ENCODE measurements at regions of chr12 and their contacts with region 1.

Region 1: DNA sequence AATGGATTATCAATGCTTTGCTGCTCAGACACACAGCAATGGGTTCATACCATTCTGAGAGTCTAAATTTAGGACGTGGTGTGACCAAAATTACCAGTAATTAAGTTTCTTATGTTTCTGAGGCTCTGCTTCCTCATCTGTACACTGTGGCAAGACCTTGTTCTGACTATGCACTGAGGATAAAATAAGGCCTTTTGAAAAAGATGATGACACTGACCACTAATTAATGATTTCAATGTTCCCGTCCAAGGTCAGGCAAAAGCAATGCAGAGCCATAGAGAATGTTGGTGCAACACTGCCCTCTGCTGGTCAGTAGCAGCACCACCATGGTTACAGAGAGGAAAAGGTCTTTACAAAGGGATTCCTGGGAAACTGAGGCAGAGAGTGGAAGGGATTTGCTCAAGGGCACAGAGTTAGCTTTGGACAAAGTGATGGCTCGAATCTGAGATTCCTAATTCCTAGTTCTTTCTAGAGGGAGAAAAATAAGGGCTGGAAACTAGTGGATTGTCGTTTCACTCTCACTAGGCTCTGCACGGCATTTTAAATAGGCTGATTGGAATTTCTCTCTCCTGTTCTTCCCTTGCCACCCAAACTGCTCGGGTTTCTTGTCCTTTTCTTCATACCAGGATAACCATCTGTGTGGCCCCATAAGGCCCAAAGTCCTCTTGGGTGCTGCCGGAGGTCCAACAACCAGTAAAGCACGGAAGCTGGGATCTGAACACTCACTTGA is 22.3 kb upstream of the P2RX7 start:
- DNase-seq: peak; percentile 80 to 85 (median 85)
- H3K4me3 ChIP-seq: no peak overlapping the region
- H3K4me3 Mint-ChIP-seq: no peak overlapping the region
- H3K27ac ChIP-seq: no peak overlapping the region
- H3K27ac Mint-ChIP-seq: peak overlapping the region in 5 of 7 donors; percentile 37 to 71 (median 58)
- H3K4me1 ChIP-seq: peaks cover 10 to 17% of the 10 kb centered on the region in 2 donors
- H3K4me1 Mint-ChIP-seq: peaks cover 16% of the 10 kb centered on the region
- H3K27me3 ChIP-seq: no peaks in the 10 kb centered on the region
- H3K27me3 Mint-ChIP-seq: peaks cover 0 to 1% (median 1%) of the 10 kb centered on the region in 3 donors
- CTCF ChIP-seq: peak; percentile 97

Region 2: DNA sequence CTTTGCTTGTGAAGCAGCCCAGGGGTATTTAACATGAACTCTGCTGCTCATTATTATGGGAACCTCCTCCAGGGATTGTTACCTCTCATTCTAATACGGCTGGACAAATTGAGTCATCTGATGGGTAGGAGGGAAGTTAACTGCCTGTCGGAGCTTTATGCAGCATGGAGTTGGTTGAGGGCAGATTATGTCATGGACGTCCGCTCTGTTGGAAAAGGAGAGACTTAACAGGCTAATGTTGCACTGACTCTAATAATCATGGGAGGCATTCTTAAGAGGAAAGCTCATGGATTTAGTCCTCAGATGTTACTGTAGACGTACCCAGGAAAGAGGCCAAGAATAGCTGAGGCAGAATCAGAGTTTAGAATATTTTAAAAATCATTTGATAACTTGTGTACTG is 539.1 kb before region 1 on chr12:
- intact Hi-C with region 1: loop called in 1 of 2 experiments (anchors 10 kb)
- DNase-seq: no peak
- H3K4me3 ChIP-seq: no peak overlapping the region
- H3K4me3 Mint-ChIP-seq: no peak overlapping the region
- H3K27ac ChIP-seq: no peak overlapping the region
- H3K27ac Mint-ChIP-seq: peak overlapping the region in 1 of 7 donors; percentile 4
- H3K4me1 ChIP-seq: no peaks in the 10 kb centered on the region
- H3K4me1 Mint-ChIP-seq: peaks cover 4% of the 10 kb centered on the region
- H3K27me3 ChIP-seq: no peaks in the 10 kb centered on the region
- H3K27me3 Mint-ChIP-seq: no peaks in the 10 kb centered on the region
- CTCF ChIP-seq: no peak

Region 3: GRCh38 chr12:121005346-121005815 is 105.0 kb before region 1 on chr12:
- intact Hi-C with region 1: loop called (anchors 5 kb)
- DNase-seq: peak; percentile 25 to 56 (median 40)
- H3K4me3 ChIP-seq: no peak overlapping the region
- H3K4me3 Mint-ChIP-seq: no peak overlapping the region
- H3K27ac ChIP-seq: no peak overlapping the region
- H3K27ac Mint-ChIP-seq: peak overlapping the region in 5 of 7 donors; percentile 26 to 71 (median 43)
- H3K4me1 ChIP-seq: no peaks in the 10 kb centered on the region
- H3K4me1 Mint-ChIP-seq: no peaks in the 10 kb centered on the region
- H3K27me3 ChIP-seq: no peaks in the 10 kb centered on the region
- H3K27me3 Mint-ChIP-seq: peaks cover 0 to 4% (median 2%) of the 10 kb centered on the region in 3 donors
- CTCF ChIP-seq: peak; percentile 81

Region 4: GRCh38 chr12:121128970-121129810 is 18.8 kb after region 1 on chr12:
- intact Hi-C with region 1: loop called in 1 of 2 experiments (anchors 1 kb)
- DNase-seq: peak; percentile 85 to 89 (median 88)
- H3K4me3 ChIP-seq: peak overlapping the region; percentile 6 to 65 (median 17)
- H3K4me3 Mint-ChIP-seq: peak overlapping the region; percentile 55 to 91
- H3K27ac ChIP-seq: peak overlapping the region; percentile 93 to 98
- H3K27ac Mint-ChIP-seq: peak overlapping the region; percentile 96 to 99 (median 98)
- H3K4me1 ChIP-seq: peaks cover 59 to 76% of the 10 kb centered on the region in 2 donors
- H3K4me1 Mint-ChIP-seq: peaks cover 76% of the 10 kb centered on the region
- H3K27me3 ChIP-seq: no peaks in the 10 kb centered on the region
- H3K27me3 Mint-ChIP-seq: peaks cover 0 to 4% (median 1%) of the 10 kb centered on the region in 3 donors
- CTCF ChIP-seq: no peak

Region 5: DNA sequence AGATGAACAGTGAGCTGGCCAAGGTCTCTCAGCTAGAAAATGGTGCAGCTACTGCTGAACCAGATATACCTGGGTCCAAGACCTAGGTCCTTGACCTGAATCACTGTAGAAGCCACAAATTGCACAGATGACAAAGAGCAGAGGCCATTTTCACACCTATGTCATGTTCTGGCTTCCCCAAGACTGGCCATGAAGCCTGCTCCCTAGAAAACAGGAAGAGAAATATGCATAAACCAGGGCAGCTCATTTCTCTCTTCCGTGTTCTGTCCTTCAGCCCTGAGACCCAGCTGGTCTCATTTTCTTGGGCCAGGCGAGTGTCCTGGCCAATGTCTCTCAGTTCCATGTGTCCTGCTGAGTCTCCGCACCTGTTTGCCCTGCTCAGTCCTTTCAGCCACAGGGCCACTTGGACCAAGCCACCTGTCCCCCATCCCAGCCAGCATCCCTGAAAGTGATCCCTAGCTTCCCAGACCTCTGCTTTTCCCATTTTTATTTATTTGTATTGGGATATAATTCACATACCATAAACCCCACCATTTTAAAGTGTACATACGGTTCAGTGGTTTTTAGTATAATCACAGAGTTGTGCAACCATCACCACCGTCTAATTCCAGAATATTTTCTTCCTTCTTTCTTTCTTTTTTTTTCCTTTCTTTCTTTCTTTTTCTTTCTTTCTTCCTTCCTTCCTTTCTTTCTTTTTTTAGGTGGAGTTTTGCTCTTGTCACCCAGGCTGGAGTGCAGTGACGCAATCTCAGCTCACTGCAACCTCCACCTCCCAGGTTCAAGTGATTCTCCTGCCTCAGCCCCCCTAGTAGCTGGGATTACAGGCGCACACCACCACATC is 49.3 kb after region 1 on chr12:
- intact Hi-C with region 1: loop called in 1 of 2 experiments (anchors 5 kb)
- DNase-seq: peak; percentile 61 to 78 (median 76)
- H3K4me3 ChIP-seq: peak overlapping the region in 1 of 3 experiments; percentile 14
- H3K4me3 Mint-ChIP-seq: peak overlapping the region in 1 of 2 donors; percentile 71
- H3K27ac ChIP-seq: peak overlapping the region; percentile 74 to 82
- H3K27ac Mint-ChIP-seq: peak overlapping the region; percentile 88 to 99 (median 95)
- H3K4me1 ChIP-seq: peaks cover 15 to 19% of the 10 kb centered on the region in 2 donors
- H3K4me1 Mint-ChIP-seq: peaks cover 20% of the 10 kb centered on the region
- H3K27me3 ChIP-seq: no peaks in the 10 kb centered on the region
- H3K27me3 Mint-ChIP-seq: peaks cover 0 to 3% (median 0%) of the 10 kb centered on the region in 3 donors
- CTCF ChIP-seq: no peak

Region 6: GRCh38 chr12:121190523-121191031 is 80.2 kb after region 1 on chr12:
- intact Hi-C with region 1: no loop called
- DNase-seq: peak; percentile 89 to 98 (median 90)
- H3K4me3 ChIP-seq: peak overlapping the region in 1 of 3 experiments; percentile 1
- H3K4me3 Mint-ChIP-seq: peak overlapping the region in 1 of 2 donors; percentile 18
- H3K27ac ChIP-seq: peak overlapping the region; percentile 60 to 67
- H3K27ac Mint-ChIP-seq: peak overlapping the region; percentile 77 to 94 (median 88)
- H3K4me1 ChIP-seq: peaks cover 26 to 29% of the 10 kb centered on the region in 2 donors
- H3K4me1 Mint-ChIP-seq: peaks cover 35% of the 10 kb centered on the region
- H3K27me3 ChIP-seq: no peaks in the 10 kb centered on the region
- H3K27me3 Mint-ChIP-seq: peaks cover 0 to 6% (median 0%) of the 10 kb centered on the region in 3 donors
- CTCF ChIP-seq: no peak